Activated CD4-positive, alpha-beta T cell treated with anti-CD3 and anti-CD28 coated beads, Interleukin-2, amount 10 ng/mL, durations not matched to agents 7 days and 5 days (primary cell): ENCODE measurements at regions of chr2 and their contacts with region 1.

Region 1: DNA sequence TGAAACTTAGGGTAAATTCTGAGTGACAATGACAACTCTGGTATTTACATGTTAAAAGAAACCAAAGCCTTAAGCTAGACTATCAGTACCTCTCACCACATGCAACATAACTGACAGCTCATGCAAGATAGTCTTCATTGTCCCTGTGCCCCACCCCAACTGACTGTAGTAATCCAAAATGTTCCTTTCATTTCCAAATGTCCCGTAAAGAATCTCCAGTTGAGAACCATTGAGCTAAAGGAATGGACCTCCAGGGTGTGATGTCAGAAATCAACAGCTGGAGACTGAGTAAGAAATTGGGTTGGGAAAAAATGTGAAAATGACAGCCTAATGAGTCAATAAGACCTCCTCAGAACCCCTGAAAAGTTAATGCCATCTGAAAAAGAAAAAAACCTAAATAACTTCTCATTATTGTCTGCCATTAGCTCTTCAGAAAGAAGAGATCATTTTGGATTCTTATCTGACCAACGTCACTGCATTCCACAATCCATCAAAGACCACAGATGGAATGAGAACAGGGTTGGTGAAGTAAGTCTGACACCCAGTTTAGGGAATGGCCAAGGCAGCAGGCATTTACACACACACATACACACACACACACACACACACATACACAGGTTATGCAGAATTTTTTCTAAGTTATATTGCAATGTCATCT is 51.7 kb upstream of the ACVR2A start:
- DNase-seq: no peak
- H3K4me3 Mint-ChIP-seq: no peak overlapping the region
- H3K27ac Mint-ChIP-seq: no peak overlapping the region
- H3K4me1 Mint-ChIP-seq: peaks cover 12% of the 10 kb centered on the region
- H3K27me3 Mint-ChIP-seq: no peaks in the 10 kb centered on the region

Region 2: GRCh38 chr2:147482111-147482895 is 310.8 kb before region 1 on chr2:
- CTCF ChIA-PET with region 1: no interaction called
- POLR2A ChIA-PET with region 1: interaction called, 13 read pairs
- DNase-seq: no peak
- H3K4me3 Mint-ChIP-seq: no peak overlapping the region
- H3K27ac Mint-ChIP-seq: no peak overlapping the region
- H3K4me1 Mint-ChIP-seq: peaks cover 3% of the 10 kb centered on the region
- H3K27me3 Mint-ChIP-seq: peaks cover 2% of the 10 kb centered on the region

Region 3: GRCh38 chr2:147696448-147696847 is 96.6 kb before region 1 on chr2:
- CTCF ChIA-PET with region 1: no interaction called
- POLR2A ChIA-PET with region 1: no interaction called
- DNase-seq: no peak
- H3K4me3 Mint-ChIP-seq: no peak overlapping the region
- H3K27ac Mint-ChIP-seq: no peak overlapping the region
- H3K4me1 Mint-ChIP-seq: no peaks in the 10 kb centered on the region
- H3K27me3 Mint-ChIP-seq: peaks cover 2% of the 10 kb centered on the region